ENCODE measurements at regions of chr9 and their contacts with region 1.

Region 1: DNA sequence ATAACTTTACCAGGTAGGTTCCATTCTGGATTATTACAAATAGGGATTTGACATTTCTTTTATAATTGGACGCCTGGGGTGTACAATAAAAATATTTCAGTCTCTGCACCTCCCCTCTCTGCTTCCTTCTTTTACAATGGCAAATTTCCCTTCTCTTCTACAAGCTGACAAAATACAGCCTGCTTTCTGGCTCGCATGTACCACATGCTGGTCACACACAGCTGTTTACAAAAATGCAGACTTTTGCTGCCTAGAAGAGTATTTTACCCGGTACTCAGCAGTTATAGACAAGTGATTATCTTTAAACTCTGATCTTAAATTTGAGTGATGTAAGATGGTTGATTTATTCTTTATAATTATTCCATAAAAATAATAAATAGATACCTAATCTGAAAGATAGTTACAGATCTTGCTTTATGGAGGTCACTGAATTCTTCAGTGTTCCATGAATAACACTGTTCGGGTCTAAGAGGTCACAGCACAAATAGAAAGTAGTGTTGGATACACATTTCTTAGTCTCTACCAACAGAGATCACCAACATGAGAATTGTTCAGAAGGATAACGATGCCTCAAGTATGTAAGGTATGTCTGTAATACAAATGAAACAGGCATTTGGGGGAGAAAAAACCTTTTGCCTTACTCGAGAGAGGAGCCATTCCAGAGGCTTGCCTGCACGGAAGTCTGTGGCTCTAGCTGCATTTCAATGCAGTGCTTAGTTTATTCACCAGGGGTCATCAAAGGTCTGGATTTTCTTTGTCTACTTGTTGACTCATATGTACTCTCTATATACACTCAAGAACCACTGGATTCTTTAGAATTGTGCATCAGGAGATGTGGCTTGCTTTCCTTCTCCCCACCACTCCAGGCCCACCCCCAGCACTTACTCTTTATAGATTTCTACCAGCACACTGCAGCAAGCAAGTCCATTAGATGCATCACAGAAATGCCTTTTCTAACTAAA is 206.6 kb upstream of the RFX3 start:
- DNase-seq: no peak
- ATAC-seq: peak; percentile 98

Region 2: GRCh38 chr9:3541206-3541605 is 191.2 kb before region 1 on chr9:
- intact Hi-C with region 1: no loop called
- DNase-seq: no peak
- ATAC-seq: no peak

Region 3: DNA sequence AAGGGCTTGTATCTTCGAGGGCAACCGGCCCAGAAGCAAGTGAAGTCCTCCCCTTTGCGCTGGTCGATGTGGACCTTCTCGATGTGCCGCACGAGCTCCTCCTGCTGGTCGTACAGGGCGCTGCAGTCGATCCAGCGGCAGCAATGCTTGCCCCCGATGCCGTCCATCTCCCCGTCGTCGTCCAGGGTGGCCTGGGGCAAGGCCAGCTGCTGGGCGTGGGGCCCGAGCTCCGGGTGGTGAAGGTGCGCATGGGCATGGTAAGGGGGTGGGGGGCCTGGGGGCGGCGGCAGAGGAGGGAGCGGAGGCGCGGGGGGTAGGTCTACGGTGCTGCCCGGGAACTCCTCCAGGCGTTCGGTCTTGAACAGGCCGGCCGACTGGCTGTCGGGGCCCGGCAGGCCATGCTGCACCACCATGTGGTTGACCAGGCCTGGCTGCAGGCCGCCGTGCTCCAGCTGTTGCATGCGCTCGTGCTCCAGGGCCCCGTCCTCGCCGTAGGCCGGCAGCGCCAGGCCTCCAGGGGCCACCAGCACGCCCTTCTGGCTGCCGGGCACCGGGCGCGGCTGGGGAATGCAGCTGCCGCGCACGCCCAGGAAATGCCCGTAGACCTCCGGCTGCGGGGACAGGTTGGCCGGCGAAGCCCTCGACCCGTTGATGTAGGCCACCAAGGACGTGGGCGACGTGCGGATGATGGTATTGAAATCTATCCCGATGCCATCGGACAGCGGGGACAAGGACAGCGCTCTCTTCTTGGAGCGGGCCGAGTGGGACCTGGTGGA is 385.7 kb after region 1 on chr9:
- intact Hi-C with region 1: loop called (anchors 10 kb)
- DNase-seq: peak; percentile 49
- ATAC-seq: no peak

Region 4: GRCh38 chr9:4228606-4229005 is 496.2 kb after region 1 on chr9:
- intact Hi-C with region 1: loop called (anchors 5 kb)
- DNase-seq: no peak
- ATAC-seq: peak; percentile 87

Region 5: GRCh38 chr9:4339357-4339756 is 607.0 kb after region 1 on chr9:
- intact Hi-C with region 1: loop called (anchors 10 kb)
- DNase-seq: peak; percentile 89
- ATAC-seq: peak; percentile 75

Region 6: GRCh38 chr9:4375424-4376200 is 643.3 kb after region 1 on chr9:
- intact Hi-C with region 1: loop called (anchors 10 kb)
- DNase-seq: no peak
- ATAC-seq: peak; percentile 60

Measured in Right ventricle myocardium superior (tissue), 1 donor.